ENCODE measurements at regions of chr3 and their contacts with region 1.

Region 1: GRCh38 chr3:150408221-150409102 is at the start of gene TSC22D2:
- DNase-seq: peak; percentile 92
- H3K4me3 Mint-ChIP-seq: peak within 1 kb of the TSS; percentile 83
- H3K27ac Mint-ChIP-seq: peak within 1 kb of the TSS; percentile 95
- H3K4me1 Mint-ChIP-seq: peaks cover 40% of the 10 kb centered on the region
- H3K27me3 Mint-ChIP-seq: peaks cover 6% of the 10 kb centered on the region
- total RNA-seq, gene TSC22D2: 21.3 and 22.7 TPM in 2 replicates

Region 2: DNA sequence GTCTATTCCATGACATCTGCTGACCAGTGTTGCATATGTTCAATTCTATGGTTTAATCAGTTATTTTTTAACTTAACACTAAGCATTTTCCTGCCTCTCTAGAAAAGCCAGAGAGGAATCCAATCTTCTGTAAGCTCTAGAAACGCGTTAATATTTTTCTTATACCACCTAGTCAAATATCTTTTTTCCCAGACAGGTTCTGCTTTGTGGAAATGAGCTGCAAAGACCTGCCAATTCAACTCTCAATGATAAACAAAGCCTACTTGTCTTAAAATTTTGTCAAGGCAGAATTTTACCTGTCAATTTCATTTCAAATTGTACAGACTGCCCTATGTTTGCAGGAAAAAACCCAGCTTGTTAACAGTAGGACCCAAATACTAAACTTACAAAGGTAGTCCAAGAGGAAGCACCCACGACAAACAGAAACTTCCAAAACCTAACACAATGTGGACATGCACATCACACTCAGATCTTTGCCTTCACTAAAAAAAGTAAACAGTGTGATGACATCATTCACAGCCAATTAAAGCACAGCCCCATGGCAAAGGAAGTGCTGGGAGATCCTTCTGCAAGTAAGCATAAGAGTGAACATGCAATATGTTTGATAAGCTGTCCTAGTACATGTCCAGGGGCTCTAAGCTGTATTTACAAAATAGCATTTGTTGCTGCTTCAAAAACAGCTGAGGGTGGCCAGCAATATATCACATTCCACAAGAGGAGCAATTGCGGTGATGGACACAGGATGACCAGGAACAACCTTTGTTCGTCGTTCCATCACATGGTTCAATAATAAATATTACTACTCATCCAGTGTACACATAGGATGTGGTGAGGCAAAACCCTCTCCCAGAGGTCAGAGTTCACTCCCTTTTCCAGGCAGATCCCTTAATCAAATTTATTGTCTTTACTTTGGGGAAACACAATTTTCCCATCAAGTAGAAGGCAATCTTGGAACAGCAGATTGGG is 139.8 kb before region 1 on chr3:
- intact Hi-C with region 1: no loop called
- DNase-seq: no peak
- H3K4me3 Mint-ChIP-seq: no peak overlapping the region
- H3K27ac Mint-ChIP-seq: no peak overlapping the region
- H3K4me1 Mint-ChIP-seq: no peaks in the 10 kb centered on the region
- H3K27me3 Mint-ChIP-seq: peaks cover 12% of the 10 kb centered on the region

Region 3: GRCh38 chr3:150286390-150287147 is 121.9 kb before region 1 on chr3:
- intact Hi-C with region 1: loop called (anchors 2 kb)
- DNase-seq: no peak
- H3K4me3 Mint-ChIP-seq: no peak overlapping the region
- H3K27ac Mint-ChIP-seq: no peak overlapping the region
- H3K4me1 Mint-ChIP-seq: no peaks in the 10 kb centered on the region
- H3K27me3 Mint-ChIP-seq: peaks cover 32% of the 10 kb centered on the region

Region 4: DNA sequence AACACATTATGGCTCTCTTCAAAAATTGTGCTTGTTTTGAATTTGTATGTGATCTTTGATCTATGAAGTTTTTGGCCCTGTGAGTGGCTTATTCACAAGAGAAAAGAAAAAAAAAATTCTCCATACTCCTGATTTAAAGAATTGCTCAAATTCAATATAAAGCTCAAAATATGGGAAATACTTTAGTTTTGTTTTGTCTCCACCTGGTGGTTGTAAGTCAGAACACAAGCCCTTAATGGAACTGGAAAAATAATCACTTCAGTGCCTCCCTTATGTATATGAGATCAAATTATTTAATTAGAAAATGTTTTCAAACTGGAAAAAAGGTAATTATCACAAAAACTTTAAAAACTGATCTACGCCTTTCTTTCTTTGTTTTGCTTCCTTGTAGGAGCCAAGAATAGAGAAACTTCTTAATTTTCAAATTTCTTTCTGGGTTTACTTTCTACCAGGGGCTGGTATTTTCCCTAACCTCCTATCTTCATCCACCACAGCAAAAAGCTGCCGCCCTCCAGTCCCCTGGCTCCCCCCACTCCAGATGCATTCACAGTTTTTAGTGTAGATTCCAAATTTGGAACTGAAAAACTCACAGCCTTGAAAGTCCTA is 87.2 kb after region 1 on chr3:
- intact Hi-C with region 1: loop called (anchors 1 kb)
- DNase-seq: no peak
- H3K4me3 Mint-ChIP-seq: no peak overlapping the region
- H3K27ac Mint-ChIP-seq: no peak overlapping the region
- H3K4me1 Mint-ChIP-seq: no peaks in the 10 kb centered on the region
- H3K27me3 Mint-ChIP-seq: peaks cover 5% of the 10 kb centered on the region

Region 5: DNA sequence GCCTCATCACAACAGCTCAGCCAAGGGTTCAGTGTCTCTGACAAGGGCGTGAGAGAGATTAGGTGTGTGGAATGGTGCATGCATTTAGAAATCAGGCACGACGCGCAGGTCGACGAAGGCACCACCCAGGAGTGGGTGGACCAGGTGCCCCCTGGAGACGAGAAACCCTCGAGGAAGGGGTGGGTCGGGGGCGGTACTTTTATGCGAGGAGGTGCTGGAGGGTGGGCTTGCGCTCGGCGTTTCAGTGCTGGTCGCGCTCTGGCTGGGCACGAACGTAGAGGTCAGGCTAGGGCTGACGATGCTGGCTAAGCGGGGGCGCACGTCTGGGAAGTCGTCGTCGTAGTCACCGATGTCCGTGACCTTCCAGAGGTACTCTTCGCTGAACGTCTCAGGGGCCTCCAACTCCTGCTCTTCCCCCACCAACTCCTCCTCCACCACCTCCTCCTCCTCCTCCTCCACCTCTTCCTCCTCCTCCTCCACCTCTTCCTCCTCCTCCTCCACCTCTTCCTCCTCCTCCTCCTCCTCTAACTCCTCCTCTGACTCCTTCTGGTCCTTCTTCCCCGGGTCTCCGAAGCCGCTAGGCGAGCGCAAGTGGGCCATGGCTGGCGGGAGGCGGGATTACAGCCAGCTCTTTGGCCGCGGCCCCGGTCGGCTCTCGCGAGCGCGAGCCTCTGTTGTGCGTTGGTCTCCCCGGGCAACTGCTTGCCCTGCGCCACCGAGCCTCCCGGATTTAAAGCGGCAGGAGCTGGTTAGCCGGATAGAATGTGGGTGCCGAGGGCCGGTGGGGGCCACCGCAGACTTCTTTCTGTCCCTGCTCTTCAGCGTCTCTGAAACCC is 295.1 kb after region 1 on chr3 and contains the start of gene ERICH6:
- intact Hi-C with region 1: loop called (anchors 5 kb)
- DNase-seq: peak; percentile 81
- H3K4me3 Mint-ChIP-seq: peak within 1 kb of the TSS; percentile 93
- H3K27ac Mint-ChIP-seq: peak within 1 kb of the TSS; percentile 99
- H3K4me1 Mint-ChIP-seq: peaks cover 23% of the 10 kb centered on the region
- H3K27me3 Mint-ChIP-seq: no peaks in the 10 kb centered on the region
- total RNA-seq, gene ERICH6: not detected in 2 replicates

Region 6: GRCh38 chr3:151265866-151266265 is 857.4 kb after region 1 on chr3:
- intact Hi-C with region 1: loop called (anchors 5 kb)
- DNase-seq: no peak
- H3K4me3 Mint-ChIP-seq: no peak overlapping the region
- H3K27ac Mint-ChIP-seq: no peak overlapping the region
- H3K4me1 Mint-ChIP-seq: peaks cover 66% of the 10 kb centered on the region
- H3K27me3 Mint-ChIP-seq: peaks cover 5% of the 10 kb centered on the region

Measured in activated T-helper 1 cell treated with anti-CD3 and anti-CD28 coated beads, Interleukin-12 subunit alpha, Interleukin-12 subunit beta, Interleukin-2, Interleukin-4 antibody, amounts not matched to agents 30 ng/mL and 10 ng/mL and 1 ng/mL, durations not matched to agents 14 hours and 24 hours and 36 hours (primary cell).